ENCODE measurements at regions of chr3 and their contacts with region 1.

Region 1: GRCh38 chr3:122679085-122679881 is 1.4 kb upstream of the PARP14 start:
- DNase-seq: peak; percentile 86
- H3K4me3 Mint-ChIP-seq: peak overlapping the region; percentile 77
- H3K27ac Mint-ChIP-seq: peak overlapping the region; percentile 83
- H3K4me1 Mint-ChIP-seq: peaks cover 16% of the 10 kb centered on the region
- H3K27me3 Mint-ChIP-seq: no peaks in the 10 kb centered on the region
- CTCF ChIP-seq: peak; percentile 77

Region 2: GRCh38 chr3:122383771-122384697 is 295.2 kb before region 1 on chr3 and contains the start of gene FAM162A:
- CTCF ChIA-PET with region 1: interaction called, 5 read pairs
- POLR2A ChIA-PET with region 1: interaction called, 12 read pairs
- intact Hi-C with region 1: no loop called
- DNase-seq: peak; percentile 93
- H3K4me3 Mint-ChIP-seq: peak within 1 kb of the TSS; percentile 98
- H3K27ac Mint-ChIP-seq: peak within 1 kb of the TSS; percentile 97
- H3K4me1 Mint-ChIP-seq: peaks cover 22% of the 10 kb centered on the region
- H3K27me3 Mint-ChIP-seq: no peaks in the 10 kb centered on the region
- CTCF ChIP-seq: peak; percentile 22
- total RNA-seq, gene FAM162A: 50.6 and 59.1 TPM in 2 replicates

Region 3: GRCh38 chr3:122458992-122459391 is 220.3 kb before region 1 on chr3:
- CTCF ChIA-PET with region 1: interaction called, 60 read pairs
- POLR2A ChIA-PET with region 1: interaction called, 9 read pairs
- intact Hi-C with region 1: loop called (anchors 1 kb)
- DNase-seq: peak; percentile 72
- H3K4me3 Mint-ChIP-seq: no peak overlapping the region
- H3K27ac Mint-ChIP-seq: no peak overlapping the region
- H3K4me1 Mint-ChIP-seq: peaks cover 7% of the 10 kb centered on the region
- H3K27me3 Mint-ChIP-seq: no peaks in the 10 kb centered on the region
- CTCF ChIP-seq: peak; percentile 32

Region 4: DNA sequence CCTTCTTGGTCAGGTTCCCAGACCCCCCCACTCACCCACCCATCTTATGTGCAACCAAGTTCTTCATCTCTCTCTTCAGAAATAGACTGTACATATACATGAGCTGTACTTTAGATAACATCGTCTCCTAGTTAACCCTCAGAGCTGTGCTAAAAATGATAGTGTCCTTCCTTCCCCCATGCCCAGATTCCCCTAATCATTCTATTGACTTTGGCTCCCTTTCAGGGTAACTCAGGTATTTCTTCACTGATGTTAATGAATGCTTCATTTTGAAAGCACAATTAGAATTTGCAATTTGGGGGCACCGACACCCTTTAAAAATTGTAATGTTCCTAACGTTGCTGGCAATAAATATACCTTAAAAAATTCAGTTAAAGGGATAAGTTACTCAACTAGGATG is 126.1 kb before region 1 on chr3:
- CTCF ChIA-PET with region 1: interaction called, 140 read pairs
- POLR2A ChIA-PET with region 1: interaction called, 3 read pairs
- intact Hi-C with region 1: no loop called
- DNase-seq: no peak
- H3K4me3 Mint-ChIP-seq: no peak overlapping the region
- H3K27ac Mint-ChIP-seq: no peak overlapping the region
- H3K4me1 Mint-ChIP-seq: no peaks in the 10 kb centered on the region
- H3K27me3 Mint-ChIP-seq: no peaks in the 10 kb centered on the region
- CTCF ChIP-seq: no peak

Region 5: GRCh38 chr3:122793568-122794416 is 114.5 kb after region 1 on chr3 and contains the start of gene HSPBAP1:
- CTCF ChIA-PET with region 1: interaction called, 5 read pairs
- POLR2A ChIA-PET with region 1: interaction called, 8 read pairs
- intact Hi-C with region 1: loop called (anchors 5 kb)
- DNase-seq: peak; percentile 97
- H3K4me3 Mint-ChIP-seq: no peak within 1 kb of the TSS
- H3K27ac Mint-ChIP-seq: peak within 1 kb of the TSS; percentile 97
- H3K4me1 Mint-ChIP-seq: peaks cover 14% of the 10 kb centered on the region
- H3K27me3 Mint-ChIP-seq: no peaks in the 10 kb centered on the region
- CTCF ChIP-seq: no peak
- total RNA-seq, gene HSPBAP1: 11.3 and 15.2 TPM in 2 replicates

Measured in MCF 10A (cell line).